Activated CD4-positive, alpha-beta memory T cell treated with anti-CD3 and anti-CD28 coated beads for 36 hours (primary cell): ENCODE measurements at regions of chr12 and their contacts with region 1.

Region 1: GRCh38 chr12:105107494-105108371 is at the start of gene WASHC4:
- DNase-seq: peak; percentile 96
- H3K4me3 Mint-ChIP-seq: peak within 1 kb of the TSS; percentile 90
- H3K27ac Mint-ChIP-seq: peak within 1 kb of the TSS; percentile 88
- H3K4me1 Mint-ChIP-seq: peaks cover 40% of the 10 kb centered on the region
- H3K27me3 Mint-ChIP-seq: peaks cover 11% of the 10 kb centered on the region
- total RNA-seq, gene WASHC4: 34.2 to 36.8 TPM

Region 2: DNA sequence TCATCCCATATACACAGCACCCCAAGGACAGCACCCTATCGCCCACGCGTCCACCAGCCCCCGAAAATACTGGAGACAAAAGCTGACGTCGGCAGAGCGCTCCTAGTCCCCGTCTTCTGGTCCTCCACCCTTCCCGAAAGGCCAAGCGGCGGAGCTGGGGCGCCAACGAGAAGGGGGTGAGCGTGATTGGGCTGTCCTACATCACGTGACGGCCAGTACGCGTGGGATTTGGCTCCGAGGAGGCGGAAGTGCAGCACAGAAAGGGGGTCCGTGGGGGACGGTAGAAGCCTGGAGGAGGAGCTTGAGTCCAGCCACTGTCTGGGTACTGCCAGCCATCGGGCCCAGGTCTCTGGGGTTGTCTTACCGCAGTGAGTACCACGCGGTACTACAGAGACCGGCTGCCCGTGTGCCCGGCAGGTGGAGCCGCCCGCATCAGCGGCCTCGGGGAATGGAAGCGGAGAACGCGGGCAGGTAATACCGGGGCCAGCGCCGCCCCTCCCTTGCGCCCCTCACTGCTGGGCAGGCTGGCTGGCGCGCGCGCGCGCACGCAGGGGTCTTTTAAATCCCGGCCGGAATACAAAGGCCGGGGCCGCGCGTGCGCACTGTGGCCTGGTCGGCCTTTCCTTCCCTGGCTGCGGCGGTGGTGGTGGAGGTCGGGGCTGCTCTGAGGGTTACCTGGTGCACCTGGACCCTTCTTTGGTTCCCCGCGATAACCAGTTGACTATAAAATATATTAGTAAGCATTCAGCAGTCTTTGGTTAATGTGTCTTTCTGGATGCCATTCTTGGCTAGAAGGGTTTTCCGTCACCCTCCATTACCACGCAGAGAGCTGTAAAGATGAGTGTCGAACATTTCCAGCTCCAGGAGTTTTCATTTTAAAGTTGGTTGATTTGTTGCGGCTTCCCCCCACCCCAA is 1141.9 kb before region 1 on chr12 and contains the start of gene TDG:
- CTCF ChIA-PET with region 1: no interaction called
- POLR2A ChIA-PET with region 1: no interaction called
- intact Hi-C with region 1: loop called (anchors 5 kb)
- DNase-seq: peak; percentile 99
- H3K4me3 Mint-ChIP-seq: peak within 1 kb of the TSS; percentile 96
- H3K27ac Mint-ChIP-seq: peak within 1 kb of the TSS; percentile 96
- H3K4me1 Mint-ChIP-seq: peaks cover 53% of the 10 kb centered on the region
- H3K27me3 Mint-ChIP-seq: no peaks in the 10 kb centered on the region
- total RNA-seq, gene TDG: 29.1 to 29.7 TPM

Region 3: DNA sequence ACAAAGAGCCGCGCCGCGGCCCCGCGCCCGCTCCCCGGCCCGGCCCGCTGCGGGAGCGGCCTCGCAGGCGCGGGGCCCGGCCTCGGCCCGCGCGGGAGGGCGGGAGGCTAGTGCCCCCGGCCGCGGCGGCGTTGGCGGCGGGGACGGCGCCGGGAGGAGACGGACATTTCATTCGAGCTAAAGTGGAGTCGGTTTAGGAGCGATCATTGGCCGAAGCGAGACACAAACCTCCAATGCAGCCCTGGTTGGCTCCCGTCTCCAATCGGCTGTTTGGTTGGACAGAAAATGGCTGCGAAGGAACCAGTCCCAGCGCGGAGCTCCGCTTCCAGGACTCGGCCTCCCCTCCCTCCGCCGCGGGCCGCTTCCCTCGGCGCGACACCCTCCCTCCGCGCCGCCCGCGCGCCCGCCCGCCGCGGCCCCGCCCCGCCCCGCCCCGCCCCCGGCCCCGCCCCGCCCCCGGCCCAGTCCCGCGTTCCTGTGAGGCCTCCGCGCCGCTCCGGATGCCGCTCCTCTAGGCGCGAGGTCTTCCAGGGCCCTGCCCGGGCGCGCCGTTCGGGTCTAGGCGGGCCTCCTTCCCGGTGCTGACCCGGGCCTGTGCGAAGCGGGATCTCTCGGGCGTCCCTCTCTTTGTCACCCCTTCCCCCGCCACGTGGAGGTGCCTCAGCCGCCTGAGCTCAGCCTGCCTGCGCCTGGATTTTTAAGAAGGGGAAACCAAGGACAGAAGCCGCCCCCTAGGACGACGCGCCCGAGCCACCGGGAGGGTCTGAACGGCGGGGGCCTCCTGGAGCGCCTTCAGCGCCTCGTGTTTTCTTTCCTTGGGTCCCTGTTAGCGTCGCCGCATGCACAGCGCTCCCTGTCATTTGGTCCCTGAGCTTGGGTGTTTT is 969.6 kb before region 1 on chr12 and contains the start of gene NFYB:
- CTCF ChIA-PET with region 1: no interaction called
- POLR2A ChIA-PET with region 1: interaction called, 4 read pairs
- intact Hi-C with region 1: loop called (anchors 1 kb)
- DNase-seq: peak; percentile 95
- H3K4me3 Mint-ChIP-seq: peak within 1 kb of the TSS; percentile 83
- H3K27ac Mint-ChIP-seq: peak within 1 kb of the TSS; percentile 84
- H3K4me1 Mint-ChIP-seq: peaks cover 13% of the 10 kb centered on the region
- H3K27me3 Mint-ChIP-seq: no peaks in the 10 kb centered on the region
- total RNA-seq, gene NFYB: 23.6 to 24.5 TPM

Region 4: GRCh38 chr12:104886418-104887401 is 221.0 kb before region 1 on chr12:
- CTCF ChIA-PET with region 1: no interaction called
- POLR2A ChIA-PET with region 1: no interaction called
- intact Hi-C with region 1: no loop called
- DNase-seq: no peak
- H3K4me3 Mint-ChIP-seq: no peak overlapping the region
- H3K27ac Mint-ChIP-seq: no peak overlapping the region
- H3K4me1 Mint-ChIP-seq: peaks cover 13% of the 10 kb centered on the region
- H3K27me3 Mint-ChIP-seq: no peaks in the 10 kb centered on the region

Region 5: GRCh38 chr12:105036937-105037649 is 70.6 kb before region 1 on chr12:
- CTCF ChIA-PET with region 1: no interaction called
- POLR2A ChIA-PET with region 1: no interaction called
- intact Hi-C with region 1: loop called (anchors 2 kb)
- DNase-seq: no peak
- H3K4me3 Mint-ChIP-seq: no peak overlapping the region
- H3K27ac Mint-ChIP-seq: peak overlapping the region; percentile 63
- H3K4me1 Mint-ChIP-seq: peaks cover 39% of the 10 kb centered on the region
- H3K27me3 Mint-ChIP-seq: no peaks in the 10 kb centered on the region

Region 6: DNA sequence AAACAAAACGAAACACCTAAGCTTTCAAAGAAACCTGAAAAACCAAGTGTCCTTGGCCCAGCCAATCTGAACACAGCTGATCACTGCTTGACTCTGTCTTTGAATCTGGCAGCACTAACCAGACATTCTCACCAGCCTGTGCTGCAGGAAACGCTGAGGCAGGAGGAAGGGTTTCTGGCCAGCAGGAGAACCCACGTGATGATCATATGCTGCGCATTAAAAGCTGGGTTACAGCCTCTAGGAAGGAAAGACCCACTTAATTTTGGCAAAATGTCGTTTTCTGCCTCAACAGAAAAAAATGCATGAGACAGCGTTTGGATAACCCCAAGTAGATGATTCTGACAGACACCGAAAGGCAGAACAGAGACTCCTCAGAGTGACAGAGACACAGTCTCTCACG is 118.5 kb after region 1 on chr12:
- CTCF ChIA-PET with region 1: no interaction called
- POLR2A ChIA-PET with region 1: no interaction called
- intact Hi-C with region 1: loop called (anchors 2 kb)
- DNase-seq: peak; percentile 38
- H3K4me3 Mint-ChIP-seq: no peak overlapping the region
- H3K27ac Mint-ChIP-seq: no peak overlapping the region
- H3K4me1 Mint-ChIP-seq: peaks cover 56% of the 10 kb centered on the region
- H3K27me3 Mint-ChIP-seq: no peaks in the 10 kb centered on the region

Region 7: DNA sequence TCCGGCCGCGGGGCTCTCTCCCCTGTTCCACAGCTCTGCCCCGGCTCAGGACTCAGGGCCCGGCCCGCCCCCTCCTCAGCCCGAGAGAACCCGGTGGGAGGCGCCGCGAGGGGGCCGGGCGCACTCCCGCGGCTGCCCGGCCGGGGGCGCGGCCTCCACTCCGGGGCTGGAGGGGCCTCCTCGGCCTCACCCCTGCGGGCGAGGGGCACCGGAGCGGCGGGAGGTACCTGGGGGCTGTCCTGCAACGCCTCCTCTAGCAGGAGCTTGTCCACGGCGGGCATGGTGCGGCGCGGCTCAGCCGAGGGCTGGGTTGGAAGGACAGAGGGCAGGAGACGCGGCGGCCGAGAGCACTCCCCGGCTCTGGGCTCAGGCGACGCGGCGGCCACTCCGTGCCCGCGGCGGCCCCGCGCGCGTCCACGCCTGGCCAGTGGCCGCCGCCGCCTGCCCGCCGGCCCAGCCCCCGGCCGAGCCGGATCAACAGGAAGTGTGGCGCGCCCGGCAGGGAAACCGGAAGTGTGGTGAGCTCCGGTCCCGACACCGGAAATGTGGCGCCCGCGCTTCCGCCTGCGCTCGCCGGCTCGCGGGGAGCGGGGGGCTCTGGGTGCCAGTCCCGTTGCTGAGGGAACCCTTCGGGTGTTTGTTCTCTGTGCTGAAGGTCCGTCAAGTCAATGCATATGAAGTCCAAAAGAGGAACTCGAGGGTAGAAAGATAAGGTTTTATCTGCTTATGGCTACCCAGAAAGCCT is 128.2 kb after region 1 on chr12 and contains the start of gene APPL2:
- CTCF ChIA-PET with region 1: no interaction called
- POLR2A ChIA-PET with region 1: interaction called, 3 read pairs
- intact Hi-C with region 1: loop called (anchors 2 kb)
- DNase-seq: peak; percentile 86
- H3K4me3 Mint-ChIP-seq: peak within 1 kb of the TSS; percentile 88
- H3K27ac Mint-ChIP-seq: peak within 1 kb of the TSS; percentile 85
- H3K4me1 Mint-ChIP-seq: peaks cover 37% of the 10 kb centered on the region
- H3K27me3 Mint-ChIP-seq: no peaks in the 10 kb centered on the region
- total RNA-seq, gene APPL2: 21.4 to 21.5 TPM

Region 8: DNA sequence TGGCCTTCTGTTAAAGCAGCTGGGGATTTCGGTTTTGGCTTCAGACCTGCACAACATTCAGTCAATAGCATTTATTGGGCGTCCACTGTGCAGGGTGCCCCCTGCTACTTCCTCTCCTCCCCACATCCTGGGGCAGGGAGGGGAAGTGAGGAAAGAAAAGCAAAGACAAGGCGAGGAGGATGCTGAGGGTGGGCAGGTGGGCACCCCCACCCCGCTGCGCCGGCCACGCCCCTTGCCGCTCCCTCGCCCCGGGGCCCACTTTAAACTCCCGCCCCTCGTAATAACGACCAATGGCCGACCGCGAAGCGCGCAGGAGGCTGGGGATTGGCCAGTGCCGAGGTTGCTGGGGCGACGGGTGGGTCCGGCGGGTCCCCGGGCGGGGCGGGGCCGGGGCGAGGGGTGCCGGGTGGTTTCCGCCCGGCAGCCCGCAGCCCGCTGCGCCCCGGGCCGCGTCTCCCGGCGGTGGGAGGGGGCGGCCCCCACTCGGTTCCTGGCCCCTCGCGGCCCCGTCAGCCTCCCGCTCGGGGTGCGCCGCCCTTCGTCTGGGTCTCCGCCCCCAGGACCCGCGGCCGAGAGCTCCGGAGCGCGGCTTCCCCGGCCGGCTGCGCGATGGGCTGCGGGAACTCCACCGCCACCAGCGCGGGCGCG is 222.7 kb after region 1 on chr12 and contains the start of gene C12orf75:
- CTCF ChIA-PET with region 1: no interaction called
- POLR2A ChIA-PET with region 1: no interaction called
- intact Hi-C with region 1: loop called (anchors 5 kb)
- DNase-seq: peak; percentile 93
- H3K4me3 Mint-ChIP-seq: peak within 1 kb of the TSS; percentile 74
- H3K27ac Mint-ChIP-seq: peak within 1 kb of the TSS; percentile 74
- H3K4me1 Mint-ChIP-seq: peaks cover 39% of the 10 kb centered on the region
- H3K27me3 Mint-ChIP-seq: no peaks in the 10 kb centered on the region
- total RNA-seq, gene C12orf75: 73.7 to 79.7 TPM